ENCODE measurements at regions of chr12 and their contacts with region 1.

Region 1: GRCh38 chr12:15276088-15276698 is 46.1 kb upstream of the PTPRO start:
- DNase-seq: peak; percentile 46
- H3K4me3 ChIP-seq: peak overlapping the region in 1 of 2 experiments; percentile 4; a peak in 1 of 4 replicates
- H3K27ac ChIP-seq: no peak overlapping the region
- H3K4me1 ChIP-seq: peaks cover 23 to 24% of the 10 kb centered on the region in 2 experiments
- H3K27me3 ChIP-seq: no peaks in the 10 kb centered on the region
- CTCF ChIP-seq: peak; percentile 77
- EP300 ChIP-seq: no peak
- RAD21 ChIP-seq: peak; percentile 88

Region 2: DNA sequence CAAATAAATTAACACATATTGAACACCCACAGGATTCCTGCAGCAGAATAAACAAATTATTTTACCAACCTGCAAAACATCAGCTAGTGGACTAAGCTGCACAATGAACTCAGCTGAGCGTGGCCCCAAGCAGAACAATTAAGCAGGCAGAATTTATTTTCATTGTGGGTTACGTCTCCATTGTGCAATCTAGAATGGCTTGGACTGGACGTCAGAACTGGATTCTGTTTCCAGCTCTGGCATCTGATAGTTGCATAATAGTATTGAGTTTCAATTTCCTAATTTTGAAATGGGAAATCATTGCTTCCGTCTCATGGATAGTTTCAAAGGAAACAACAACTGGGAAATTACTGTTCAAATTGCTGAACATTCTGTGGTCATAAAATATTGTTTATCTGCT is 19.4 kb before region 1 on chr12:
- CTCF ChIA-PET with region 1: interaction called, 12 read pairs
- POLR2A ChIA-PET with region 1: no interaction called
- DNase-seq: no peak
- H3K4me3 ChIP-seq: no peak overlapping the region
- H3K27ac ChIP-seq: no peak overlapping the region
- H3K4me1 ChIP-seq: no peaks in the 10 kb centered on the region
- H3K27me3 ChIP-seq: peaks cover 7% of the 10 kb centered on the region; the same call in 1 of the 2 replicates
- CTCF ChIP-seq: no peak
- EP300 ChIP-seq: no peak
- RAD21 ChIP-seq: no peak

Region 3: DNA sequence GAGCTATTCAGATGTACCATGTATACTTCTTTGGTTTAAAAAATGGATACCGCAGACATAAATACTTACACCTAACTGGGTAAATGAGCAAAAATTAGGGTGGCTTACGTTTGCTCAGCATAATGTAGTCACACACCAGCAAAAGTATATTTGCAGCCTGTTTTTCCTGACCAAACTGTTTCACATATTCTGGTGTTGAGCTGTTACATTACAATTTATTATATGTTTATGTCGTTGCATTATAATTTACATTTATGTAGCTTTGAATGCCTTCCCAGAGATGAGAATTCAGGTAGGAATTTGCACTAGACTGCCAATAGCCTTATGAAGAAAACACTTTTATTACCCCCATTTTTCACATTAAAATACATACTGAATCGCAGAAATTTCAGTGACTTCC is 229.4 kb after region 1 on chr12:
- CTCF ChIA-PET with region 1: interaction called, 13 read pairs
- POLR2A ChIA-PET with region 1: no interaction called
- DNase-seq: no peak
- H3K4me3 ChIP-seq: no peak overlapping the region
- H3K27ac ChIP-seq: no peak overlapping the region
- H3K4me1 ChIP-seq: no peaks in the 10 kb centered on the region
- H3K27me3 ChIP-seq: no peaks in the 10 kb centered on the region
- CTCF ChIP-seq: no peak
- EP300 ChIP-seq: no peak
- RAD21 ChIP-seq: no peak

Region 4: GRCh38 chr12:15515010-15515409 is 238.8 kb after region 1 on chr12:
- CTCF ChIA-PET with region 1: interaction called, 24 read pairs
- POLR2A ChIA-PET with region 1: no interaction called
- DNase-seq: no peak
- H3K4me3 ChIP-seq: no peak overlapping the region
- H3K27ac ChIP-seq: no peak overlapping the region
- H3K4me1 ChIP-seq: no peaks in the 10 kb centered on the region
- H3K27me3 ChIP-seq: no peaks in the 10 kb centered on the region
- CTCF ChIP-seq: no peak
- EP300 ChIP-seq: no peak
- RAD21 ChIP-seq: no peak

Region 5: GRCh38 chr12:15522565-15523187 is 246.5 kb after region 1 on chr12:
- CTCF ChIA-PET with region 1: interaction called, 43 read pairs
- POLR2A ChIA-PET with region 1: no interaction called
- DNase-seq: peak; percentile 43
- H3K4me3 ChIP-seq: no peak overlapping the region
- H3K27ac ChIP-seq: no peak overlapping the region
- H3K4me1 ChIP-seq: no peaks in the 10 kb centered on the region
- H3K27me3 ChIP-seq: no peaks in the 10 kb centered on the region
- CTCF ChIP-seq: peak; percentile 79
- EP300 ChIP-seq: no peak
- RAD21 ChIP-seq: peak; percentile 93

Region 6: GRCh38 chr12:15534322-15534721 is 258.1 kb after region 1 on chr12:
- CTCF ChIA-PET with region 1: interaction called, 10 read pairs
- POLR2A ChIA-PET with region 1: no interaction called
- DNase-seq: no peak
- H3K4me3 ChIP-seq: no peak overlapping the region
- H3K27ac ChIP-seq: no peak overlapping the region
- H3K4me1 ChIP-seq: no peaks in the 10 kb centered on the region; a peak in 1 of 4 replicates
- H3K27me3 ChIP-seq: no peaks in the 10 kb centered on the region
- CTCF ChIP-seq: no peak
- EP300 ChIP-seq: no peak
- RAD21 ChIP-seq: no peak

Region 7: DNA sequence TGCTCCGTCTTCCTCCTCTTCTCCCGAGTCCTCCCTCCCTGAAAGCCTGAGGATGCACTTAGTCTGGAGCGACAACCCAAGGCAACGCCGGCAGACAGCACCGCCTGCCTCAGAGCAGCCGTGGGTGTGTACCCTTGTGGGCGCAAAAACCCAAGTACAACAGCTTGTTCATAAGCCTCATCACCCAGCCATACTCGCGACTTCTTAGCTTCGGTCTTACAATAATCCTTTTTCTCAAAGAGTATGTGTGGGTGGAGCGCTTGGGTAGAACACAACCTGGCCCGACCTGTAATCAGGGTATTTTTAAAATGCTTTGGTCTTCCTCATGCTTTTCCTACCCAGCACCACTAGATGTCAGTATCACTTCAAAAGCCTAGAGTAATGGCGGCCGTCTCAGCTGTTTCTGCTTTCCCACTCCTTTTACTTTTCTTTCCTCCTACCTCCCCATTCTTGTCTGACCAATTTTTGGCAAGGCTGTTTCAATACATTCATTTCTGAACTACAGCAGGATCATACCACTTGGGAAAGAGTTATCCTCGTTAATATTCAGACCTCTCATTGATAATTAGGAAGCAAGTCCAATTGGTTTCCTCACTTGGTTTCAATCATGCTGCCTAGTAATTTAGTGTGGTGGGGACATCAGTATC is 314.1 kb after region 1 on chr12:
- CTCF ChIA-PET with region 1: interaction called, 12 read pairs
- POLR2A ChIA-PET with region 1: no interaction called
- DNase-seq: peak; percentile 67
- H3K4me3 ChIP-seq: peak overlapping the region in 1 of 2 experiments; percentile 25; a peak in 1 of 4 replicates
- H3K27ac ChIP-seq: peak overlapping the region in 1 of 2 experiments; percentile 12; a peak in 1 of 4 replicates
- H3K4me1 ChIP-seq: no peaks in the 10 kb centered on the region; a peak in 2 of 4 replicates
- H3K27me3 ChIP-seq: no peaks in the 10 kb centered on the region
- CTCF ChIP-seq: peak; percentile 92
- EP300 ChIP-seq: no peak
- RAD21 ChIP-seq: peak; percentile 91